ENCODE measurements at regions of chr2 and their contacts with region 1.

Region 1: DNA sequence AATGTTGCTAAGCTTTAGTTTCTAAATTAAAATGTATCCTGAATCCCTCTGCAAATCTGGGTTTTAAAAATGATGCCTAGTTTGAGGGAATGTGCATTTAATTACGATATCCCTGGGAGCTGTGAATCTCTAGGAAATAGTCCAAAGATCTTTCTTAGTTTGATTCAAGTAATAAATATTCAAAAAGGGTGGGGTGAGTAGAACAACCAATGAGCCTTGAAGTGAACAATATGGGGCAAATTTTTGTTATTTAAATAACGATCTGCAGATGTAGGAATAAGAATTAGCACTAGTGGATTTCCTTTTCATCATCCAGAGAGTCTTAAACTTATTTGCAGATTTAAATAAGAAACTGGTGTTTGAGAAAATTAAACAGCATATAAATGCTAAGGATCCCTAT is 106.3 kb downstream of the ACVR1 start:
- DNase-seq: no peak
- ATAC-seq: no peak
- H3K4me3 ChIP-seq: no peak overlapping the region
- H3K27ac ChIP-seq: no peak overlapping the region
- H3K4me1 ChIP-seq: no peaks in the 10 kb centered on the region
- H3K27me3 ChIP-seq: no peaks in the 10 kb centered on the region
- CTCF ChIP-seq: no peak

Region 2: DNA sequence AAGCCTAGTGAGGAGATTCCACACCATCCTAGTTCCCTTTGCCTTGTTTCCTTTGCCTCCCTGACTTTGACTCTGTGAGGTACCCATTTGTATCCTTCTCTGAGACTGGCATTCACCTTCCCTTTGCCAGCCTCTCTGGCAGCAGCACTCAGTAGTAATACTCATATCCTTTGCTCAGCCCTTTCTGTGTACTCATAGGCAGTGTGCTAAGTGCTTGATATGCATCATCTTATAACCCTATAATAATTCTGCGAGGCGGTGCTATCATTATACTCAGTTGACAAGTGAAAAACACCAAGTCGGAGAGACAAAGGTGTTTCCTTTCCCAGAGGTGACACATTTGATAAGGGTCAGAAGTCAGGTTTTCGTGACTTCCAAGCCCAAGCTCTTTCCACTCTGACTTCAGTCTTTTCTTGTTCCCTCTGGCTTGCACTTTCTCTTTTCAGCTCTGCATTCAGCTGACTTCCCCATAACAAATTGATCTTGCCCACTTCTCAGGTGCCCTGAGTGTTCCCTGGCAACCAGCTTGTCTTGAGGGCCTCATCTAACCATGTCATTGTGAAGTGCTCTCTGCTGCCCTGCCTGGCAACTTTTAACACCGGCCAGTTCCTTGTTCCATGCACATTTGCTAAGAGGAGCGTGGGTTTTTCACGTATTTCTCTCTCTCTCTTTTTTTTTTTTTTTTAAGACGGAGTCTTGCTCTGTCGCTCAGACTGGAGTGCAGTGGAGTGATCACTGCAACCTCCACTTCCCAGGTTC is 237.3 kb after region 1 on chr2:
- intact Hi-C with region 1: loop called in 1 of 2 experiments (anchors 5 kb)
- DNase-seq: peak in 2 of 4 donors; percentile 48 to 58
- ATAC-seq: peak; percentile 91
- H3K4me3 ChIP-seq: no peak overlapping the region
- H3K27ac ChIP-seq: no peak overlapping the region
- H3K4me1 ChIP-seq: peaks cover 0 to 14% of the 10 kb centered on the region in 2 donors
- H3K27me3 ChIP-seq: no peaks in the 10 kb centered on the region
- CTCF ChIP-seq: no peak

Region 3: GRCh38 chr2:158337018-158337417 is 567.2 kb after region 1 on chr2:
- intact Hi-C with region 1: no loop called
- DNase-seq: no peak
- ATAC-seq: no peak
- H3K4me3 ChIP-seq: no peak overlapping the region
- H3K27ac ChIP-seq: no peak overlapping the region
- H3K4me1 ChIP-seq: no peaks in the 10 kb centered on the region
- H3K27me3 ChIP-seq: no peaks in the 10 kb centered on the region
- CTCF ChIP-seq: no peak

Measured in left lung (tissue), 14 donors.